ENCODE measurements at regions of chr20 and their contacts with region 1.

Region 1: GRCh38 chr20:11544029-11544678 is 373.5 kb upstream of the BTBD3 start:
- DNase-seq: no peak
- ATAC-seq: peak; percentile 58 to 80 (median 62)
- H3K4me3 ChIP-seq: no peak overlapping the region
- H3K27ac ChIP-seq: no peak overlapping the region
- H3K4me1 ChIP-seq: no peaks in the 10 kb centered on the region
- H3K27me3 ChIP-seq: no peaks in the 10 kb centered on the region
- CTCF ChIP-seq: peak; percentile 70

Region 2: GRCh38 chr20:9616833-9617489 is 1927.2 kb before region 1 on chr20:
- intact Hi-C with region 1: loop called in 1 of 2 experiments (anchors 10 kb)
- DNase-seq: peak; percentile 25 to 55
- ATAC-seq: peak; percentile 49 to 85 (median 64)
- H3K4me3 ChIP-seq: no peak overlapping the region
- H3K27ac ChIP-seq: no peak overlapping the region
- H3K4me1 ChIP-seq: no peaks in the 10 kb centered on the region
- H3K27me3 ChIP-seq: no peaks in the 10 kb centered on the region
- CTCF ChIP-seq: peak; percentile 87

Region 3: GRCh38 chr20:9978397-9979004 is 1565.7 kb before region 1 on chr20:
- intact Hi-C with region 1: loop called (anchors 10 kb)
- DNase-seq: no peak
- ATAC-seq: peak; percentile 67 to 85 (median 76)
- H3K4me3 ChIP-seq: no peak overlapping the region
- H3K27ac ChIP-seq: no peak overlapping the region
- H3K4me1 ChIP-seq: no peaks in the 10 kb centered on the region
- H3K27me3 ChIP-seq: no peaks in the 10 kb centered on the region
- CTCF ChIP-seq: peak; percentile 74

Region 4: GRCh38 chr20:10316582-10316981 is 1227.6 kb before region 1 on chr20:
- intact Hi-C with region 1: loop called (anchors 5 to 10 kb)
- DNase-seq: no peak
- ATAC-seq: no peak
- H3K4me3 ChIP-seq: no peak overlapping the region
- H3K27ac ChIP-seq: no peak overlapping the region
- H3K4me1 ChIP-seq: no peaks in the 10 kb centered on the region
- H3K27me3 ChIP-seq: peaks cover 0 to 4% (median 0%) of the 10 kb centered on the region in 3 donors
- CTCF ChIP-seq: peak; percentile 35

Region 5: DNA sequence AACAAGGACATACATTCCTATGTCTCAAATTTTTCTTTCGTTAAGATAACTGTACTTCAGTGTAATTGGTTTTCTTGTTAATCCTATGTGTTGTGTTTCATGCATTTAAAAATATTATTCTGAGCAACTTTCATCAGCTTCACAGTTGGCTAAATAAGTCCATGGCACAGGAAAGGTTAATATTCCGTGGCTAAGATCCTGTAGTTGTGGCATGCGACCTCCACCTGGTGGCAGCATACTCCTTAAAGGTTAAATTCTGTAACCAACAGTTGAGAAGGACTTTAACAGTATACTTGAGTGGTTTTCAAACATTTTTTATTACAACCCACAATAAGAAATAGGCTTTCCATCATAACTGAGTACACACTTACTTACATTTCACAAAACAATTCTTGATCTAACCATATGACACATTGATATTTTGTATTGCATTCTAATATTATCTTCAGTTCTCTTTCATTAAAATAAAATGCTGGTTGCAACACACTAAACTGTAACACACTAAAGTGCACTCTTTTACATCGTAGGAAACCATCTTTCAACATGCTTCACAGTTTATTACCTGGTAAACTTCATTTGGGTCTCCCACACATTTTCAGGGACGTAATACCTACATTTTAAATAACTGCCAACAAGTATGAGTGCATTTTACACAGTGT is 990.7 kb before region 1 on chr20:
- intact Hi-C with region 1: loop called (anchors 2 to 5 kb)
- DNase-seq: peak; percentile 63 to 79
- ATAC-seq: peak; percentile 67 to 89 (median 78)
- H3K4me3 ChIP-seq: no peak overlapping the region
- H3K27ac ChIP-seq: no peak overlapping the region
- H3K4me1 ChIP-seq: peaks cover 3% of the 10 kb centered on the region
- H3K27me3 ChIP-seq: no peaks in the 10 kb centered on the region
- CTCF ChIP-seq: peak; percentile 82

Region 6: GRCh38 chr20:11484479-11484878 is 59.7 kb before region 1 on chr20:
- intact Hi-C with region 1: no loop called
- DNase-seq: no peak
- ATAC-seq: no peak
- H3K4me3 ChIP-seq: no peak overlapping the region
- H3K27ac ChIP-seq: no peak overlapping the region
- H3K4me1 ChIP-seq: no peaks in the 10 kb centered on the region
- H3K27me3 ChIP-seq: no peaks in the 10 kb centered on the region
- CTCF ChIP-seq: no peak

Measured in psoas muscle (tissue), 8 donors.